Activated CD8-positive, alpha-beta T cell treated with anti-CD3 and anti-CD28 coated beads for 36 hours (primary cell): ENCODE measurements at regions of chr18 and their contacts with region 1.

Region 1: GRCh38 chr18:55234366-55235093 is 275.3 kb upstream of the CCDC68 start:
- DNase-seq: peak; percentile 78
- ATAC-seq: peak; percentile 66
- H3K4me3 Mint-ChIP-seq: no peak overlapping the region
- H3K27ac Mint-ChIP-seq: no peak overlapping the region
- H3K4me1 Mint-ChIP-seq: no peaks in the 10 kb centered on the region
- H3K27me3 Mint-ChIP-seq: no peaks in the 10 kb centered on the region
- CTCF ChIP-seq: peak; percentile 69

Region 2: GRCh38 chr18:55224086-55224625 is 10.4 kb before region 1 on chr18:
- CTCF ChIA-PET with region 1: interaction called, 11 read pairs
- POLR2A ChIA-PET with region 1: no interaction called
- intact Hi-C with region 1: no loop called
- DNase-seq: no peak
- ATAC-seq: no peak
- H3K4me3 Mint-ChIP-seq: no peak overlapping the region
- H3K27ac Mint-ChIP-seq: no peak overlapping the region
- H3K4me1 Mint-ChIP-seq: no peaks in the 10 kb centered on the region
- H3K27me3 Mint-ChIP-seq: no peaks in the 10 kb centered on the region
- CTCF ChIP-seq: no peak

Region 3: GRCh38 chr18:55275039-55275901 is 40.7 kb after region 1 on chr18:
- CTCF ChIA-PET with region 1: interaction called, 19 read pairs
- POLR2A ChIA-PET with region 1: no interaction called
- intact Hi-C with region 1: no loop called
- DNase-seq: no peak
- ATAC-seq: no peak
- H3K4me3 Mint-ChIP-seq: no peak overlapping the region
- H3K27ac Mint-ChIP-seq: no peak overlapping the region
- H3K4me1 Mint-ChIP-seq: no peaks in the 10 kb centered on the region
- H3K27me3 Mint-ChIP-seq: no peaks in the 10 kb centered on the region
- CTCF ChIP-seq: peak; percentile 39

Region 4: DNA sequence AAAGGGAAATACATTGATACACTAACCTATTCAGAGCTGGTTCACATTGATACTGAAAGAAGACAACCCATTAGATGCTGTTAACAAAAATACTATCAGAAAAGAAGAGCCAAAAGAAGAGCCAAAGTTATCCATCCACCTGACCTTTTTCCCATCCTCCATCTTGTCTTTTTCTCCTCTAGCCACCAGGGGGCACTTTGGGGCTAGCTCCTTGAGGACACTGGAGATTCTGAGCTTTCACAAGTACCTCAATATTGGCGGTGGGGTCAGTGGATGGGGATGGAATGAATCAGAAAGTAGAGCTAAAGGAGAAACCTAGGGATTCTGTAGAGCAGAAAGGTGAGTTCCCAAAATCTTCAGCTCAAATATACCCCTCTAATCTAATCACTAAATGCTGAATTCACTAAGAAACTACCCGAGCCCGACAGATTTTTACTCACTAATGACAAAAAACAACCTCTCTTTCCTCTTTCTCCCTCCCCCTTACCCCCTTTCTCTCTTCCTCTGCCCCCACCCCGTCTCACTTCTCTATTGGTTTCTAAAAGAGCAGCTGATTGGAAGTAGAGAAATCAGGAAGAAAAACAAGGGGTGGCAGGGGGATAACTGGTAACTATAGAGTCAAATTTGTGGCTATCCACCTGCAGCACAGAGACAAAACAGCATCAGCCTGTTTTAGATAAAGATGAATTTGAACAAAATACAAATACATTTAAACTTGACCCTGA is 150.2 kb after region 1 on chr18:
- CTCF ChIA-PET with region 1: interaction called, 4 read pairs
- POLR2A ChIA-PET with region 1: no interaction called
- intact Hi-C with region 1: loop called (anchors 10 kb)
- DNase-seq: peak; percentile 29
- ATAC-seq: no peak
- H3K4me3 Mint-ChIP-seq: no peak overlapping the region
- H3K27ac Mint-ChIP-seq: no peak overlapping the region
- H3K4me1 Mint-ChIP-seq: peaks cover 2% of the 10 kb centered on the region
- H3K27me3 Mint-ChIP-seq: no peaks in the 10 kb centered on the region
- CTCF ChIP-seq: peak; percentile 59

Region 5: DNA sequence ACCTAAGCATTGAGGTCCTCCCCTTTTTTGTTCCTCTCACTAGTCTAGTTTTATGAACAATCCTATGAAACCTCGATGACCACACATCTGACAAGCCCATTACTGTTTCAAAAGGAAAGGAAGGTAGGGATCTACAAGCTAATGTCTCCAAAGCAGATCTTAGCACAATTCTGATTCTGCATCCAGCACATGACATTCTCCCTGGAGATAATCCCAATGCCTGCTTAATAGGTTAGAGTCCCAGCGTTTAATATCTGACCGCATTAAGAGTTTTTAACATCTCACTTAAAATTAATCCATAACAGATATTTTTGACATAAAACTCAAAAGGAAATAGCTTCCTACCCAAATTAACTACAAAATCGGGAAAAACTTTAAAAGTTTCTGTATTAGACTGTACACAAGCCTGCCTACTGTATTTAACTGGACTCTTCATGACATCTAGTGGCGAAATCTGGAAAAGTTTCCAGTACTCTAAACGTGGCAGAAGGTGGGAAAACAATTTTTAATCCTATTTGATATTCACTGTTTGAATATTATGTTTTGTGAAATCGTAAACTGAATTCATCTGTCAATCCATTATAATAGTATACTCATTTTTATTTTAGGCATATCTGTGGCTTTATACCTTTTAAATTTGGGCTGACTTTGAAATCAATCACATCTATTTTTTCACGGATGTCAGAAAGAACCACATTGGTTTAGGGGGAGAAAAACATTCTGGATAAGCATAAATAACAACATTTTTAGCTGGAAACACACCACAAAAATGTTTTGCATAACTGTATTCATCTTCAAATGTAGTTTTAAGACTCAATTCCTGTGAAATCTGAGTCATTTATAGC is 1341.5 kb after region 1 on chr18:
- CTCF ChIA-PET with region 1: interaction called, 5 read pairs
- POLR2A ChIA-PET with region 1: no interaction called
- intact Hi-C with region 1: loop called (anchors 10 kb)
- DNase-seq: no peak
- ATAC-seq: no peak
- H3K4me3 Mint-ChIP-seq: no peak overlapping the region
- H3K27ac Mint-ChIP-seq: no peak overlapping the region
- H3K4me1 Mint-ChIP-seq: no peaks in the 10 kb centered on the region
- H3K27me3 Mint-ChIP-seq: peaks cover 5% of the 10 kb centered on the region
- CTCF ChIP-seq: peak; percentile 67